ENCODE measurements at regions of chr3 and their contacts with region 1.

Region 1: GRCh38 chr3:160801386-160802118 is 45.5 kb downstream of the PPM1L start:
- DNase-seq: peak; percentile 50
- ATAC-seq: peak; percentile 87

Region 2: DNA sequence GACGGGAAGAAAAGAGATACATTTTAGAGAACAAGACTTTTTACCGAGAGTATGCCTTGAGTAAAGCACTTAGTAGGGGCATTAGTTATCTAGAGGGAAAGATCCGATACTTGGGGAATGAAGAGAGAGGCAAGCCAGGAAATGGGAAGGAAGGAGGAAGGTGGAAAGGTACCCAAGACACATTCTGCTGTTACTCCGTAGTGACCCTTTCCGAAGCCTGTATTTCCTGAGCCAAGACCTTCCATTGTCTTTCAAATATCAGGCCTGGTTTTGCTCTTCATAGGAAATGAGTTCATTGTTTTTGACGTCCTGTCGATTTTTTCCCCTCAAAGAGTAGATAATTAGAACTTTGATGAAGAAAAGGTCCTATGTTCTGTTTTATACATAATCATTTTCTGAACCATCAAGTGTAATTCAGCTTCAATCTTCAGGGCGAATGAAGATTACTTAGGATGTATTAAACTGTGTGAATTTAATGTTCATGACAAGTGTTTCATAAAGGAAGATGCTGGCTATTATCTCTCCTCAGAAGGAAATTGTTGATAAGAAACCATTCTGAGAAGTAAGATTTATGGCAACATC is 50.2 kb after region 1 on chr3:
- intact Hi-C with region 1: no loop called
- DNase-seq: no peak
- ATAC-seq: no peak

Region 3: DNA sequence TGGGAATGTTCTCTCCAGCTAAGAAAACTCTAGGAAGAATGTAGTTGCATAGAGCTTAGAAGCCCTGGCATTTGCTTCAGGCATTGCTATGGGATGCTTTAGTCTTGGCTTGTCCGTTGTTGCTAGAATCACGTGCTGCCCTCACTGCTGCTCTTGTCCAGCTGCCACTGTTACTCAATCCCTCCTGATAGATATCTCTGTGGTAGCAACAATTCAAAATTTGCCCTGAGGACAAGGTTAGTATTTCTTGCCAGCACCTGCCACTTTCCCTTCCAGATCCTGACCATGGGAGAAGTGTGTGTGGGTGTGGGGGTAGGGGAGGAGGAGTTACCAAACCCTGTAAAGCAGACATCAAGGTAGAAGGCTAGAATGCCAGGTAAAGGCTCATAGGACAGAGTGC is 68.3 kb after region 1 on chr3:
- intact Hi-C with region 1: loop called (anchors 10 kb)
- DNase-seq: peak; percentile 45
- ATAC-seq: peak; percentile 88

Measured in Right ventricle myocardium superior (tissue), 1 donor.